Activated CD8-positive, alpha-beta T cell treated with anti-CD3 and anti-CD28 coated beads, Interleukin-2, amount 10 ng/mL, durations not matched to agents 7 days and 5 days (primary cell): ENCODE measurements at regions of chr21 and their contacts with region 1.

Region 1: DNA sequence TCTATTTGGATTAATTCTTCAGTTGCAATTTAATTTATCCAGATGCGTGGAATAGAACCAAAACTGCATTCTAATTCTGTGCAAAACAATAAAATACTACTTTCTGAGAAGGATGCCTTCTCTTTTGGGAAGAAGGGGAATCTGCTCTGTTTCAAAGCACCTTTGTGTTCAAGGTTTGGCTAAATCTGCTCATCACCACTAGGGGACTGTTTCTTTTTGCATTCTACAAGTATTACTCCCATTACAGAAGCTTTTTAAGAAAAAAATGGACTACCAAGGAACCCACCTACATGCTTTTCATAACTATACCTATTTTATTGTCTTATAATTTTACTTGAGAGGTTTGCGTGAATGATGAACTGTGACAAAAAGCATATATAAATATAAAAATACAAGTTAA is 18.2 kb downstream of the MRPS6 start:
- DNase-seq: no peak
- ATAC-seq: no peak
- H3K4me3 Mint-ChIP-seq: no peak overlapping the region
- H3K27ac Mint-ChIP-seq: no peak overlapping the region
- H3K4me1 Mint-ChIP-seq: peaks cover 43% of the 10 kb centered on the region
- H3K27me3 Mint-ChIP-seq: no peaks in the 10 kb centered on the region

Region 2: GRCh38 chr21:34073032-34073869 is 18.4 kb before region 1 on chr21 and contains the starts of genes MRPS6 and SLC5A3:
- CTCF ChIA-PET with region 1: interaction called, 62 read pairs
- POLR2A ChIA-PET with region 1: interaction called, 4 read pairs
- DNase-seq: peak; percentile 75
- ATAC-seq: peak; percentile 72
- H3K4me3 Mint-ChIP-seq: peak within 1 kb of the TSS; percentile 92
- H3K27ac Mint-ChIP-seq: peak within 1 kb of the TSS; percentile 75
- H3K4me1 Mint-ChIP-seq: peaks cover 45% of the 10 kb centered on the region
- H3K27me3 Mint-ChIP-seq: peaks cover 4% of the 10 kb centered on the region
- total RNA-seq, gene MRPS6: 80.2 to 84.3 TPM
- total RNA-seq, gene SLC5A3: 22.4 to 24.2 TPM

Region 3: GRCh38 chr21:34105947-34106541 is 14.4 kb after region 1 on chr21:
- CTCF ChIA-PET with region 1: interaction called, 22 read pairs
- POLR2A ChIA-PET with region 1: no interaction called
- DNase-seq: no peak
- ATAC-seq: no peak
- H3K4me3 Mint-ChIP-seq: no peak overlapping the region
- H3K27ac Mint-ChIP-seq: no peak overlapping the region
- H3K4me1 Mint-ChIP-seq: peaks cover 25% of the 10 kb centered on the region
- H3K27me3 Mint-ChIP-seq: no peaks in the 10 kb centered on the region

Region 4: GRCh38 chr21:34129039-34129891 is 37.7 kb after region 1 on chr21:
- CTCF ChIA-PET with region 1: interaction called, 11 read pairs
- POLR2A ChIA-PET with region 1: interaction called, 4 read pairs
- DNase-seq: peak; percentile 85
- ATAC-seq: peak; percentile 90
- H3K4me3 Mint-ChIP-seq: peak overlapping the region; percentile 38
- H3K27ac Mint-ChIP-seq: peak overlapping the region; percentile 83
- H3K4me1 Mint-ChIP-seq: peaks cover 76% of the 10 kb centered on the region
- H3K27me3 Mint-ChIP-seq: no peaks in the 10 kb centered on the region

Region 5: GRCh38 chr21:34345091-34345871 is 253.7 kb after region 1 on chr21:
- CTCF ChIA-PET with region 1: interaction called, 13 read pairs
- POLR2A ChIA-PET with region 1: no interaction called
- DNase-seq: no peak
- ATAC-seq: no peak
- H3K4me3 Mint-ChIP-seq: no peak overlapping the region
- H3K27ac Mint-ChIP-seq: no peak overlapping the region
- H3K4me1 Mint-ChIP-seq: peaks cover 8% of the 10 kb centered on the region
- H3K27me3 Mint-ChIP-seq: peaks cover 10% of the 10 kb centered on the region